ENCODE measurements at regions of chr4 and their contacts with region 1.

Region 1: GRCh38 chr4:141730805-141731204 is 94.4 kb downstream of the IL15 start:
- DNase-seq: no peak

Region 2: DNA sequence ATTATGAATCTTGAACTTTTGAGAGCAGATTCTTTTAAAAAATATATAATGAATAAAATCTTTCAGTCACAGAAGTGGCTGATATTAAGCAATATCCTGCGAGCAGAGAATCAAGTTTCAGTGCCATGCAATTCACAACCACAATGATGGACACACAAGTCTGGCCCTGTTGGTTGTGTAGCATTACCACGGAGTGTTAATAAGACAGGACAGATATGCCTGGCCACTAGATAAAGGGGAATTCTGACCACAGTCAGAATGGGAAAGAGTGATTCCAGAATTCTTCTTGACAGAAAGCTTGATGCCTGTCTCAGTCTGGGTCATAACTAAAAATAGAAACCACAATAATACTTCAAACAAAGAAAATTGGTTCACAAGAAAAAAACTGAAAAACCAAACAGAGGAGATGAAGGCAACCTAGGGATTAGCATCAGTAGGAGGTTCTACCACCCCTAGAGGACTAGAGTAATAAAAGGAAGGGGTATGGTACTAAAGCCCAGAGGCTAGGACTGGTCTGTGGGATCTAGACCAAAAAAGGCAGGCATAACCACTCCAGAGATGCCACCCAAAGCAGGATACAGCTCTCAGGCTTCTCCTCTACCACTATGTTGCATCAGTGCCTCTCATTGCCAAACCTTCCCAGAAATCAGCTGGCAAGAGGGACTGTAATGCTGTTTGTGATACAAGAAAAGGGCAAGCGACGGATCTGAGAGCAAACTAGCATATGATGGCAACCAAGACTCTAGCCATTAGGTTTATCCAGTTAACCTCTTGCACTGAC is 656.5 kb before region 1 on chr4:
- intact Hi-C with region 1: loop called in 1 of 2 experiments (anchors 5 kb)
- DNase-seq: no peak

Measured in posterior vena cava (tissue), 2 donors.